ENCODE measurements at regions of chr12 and their contacts with region 1.

Region 1: DNA sequence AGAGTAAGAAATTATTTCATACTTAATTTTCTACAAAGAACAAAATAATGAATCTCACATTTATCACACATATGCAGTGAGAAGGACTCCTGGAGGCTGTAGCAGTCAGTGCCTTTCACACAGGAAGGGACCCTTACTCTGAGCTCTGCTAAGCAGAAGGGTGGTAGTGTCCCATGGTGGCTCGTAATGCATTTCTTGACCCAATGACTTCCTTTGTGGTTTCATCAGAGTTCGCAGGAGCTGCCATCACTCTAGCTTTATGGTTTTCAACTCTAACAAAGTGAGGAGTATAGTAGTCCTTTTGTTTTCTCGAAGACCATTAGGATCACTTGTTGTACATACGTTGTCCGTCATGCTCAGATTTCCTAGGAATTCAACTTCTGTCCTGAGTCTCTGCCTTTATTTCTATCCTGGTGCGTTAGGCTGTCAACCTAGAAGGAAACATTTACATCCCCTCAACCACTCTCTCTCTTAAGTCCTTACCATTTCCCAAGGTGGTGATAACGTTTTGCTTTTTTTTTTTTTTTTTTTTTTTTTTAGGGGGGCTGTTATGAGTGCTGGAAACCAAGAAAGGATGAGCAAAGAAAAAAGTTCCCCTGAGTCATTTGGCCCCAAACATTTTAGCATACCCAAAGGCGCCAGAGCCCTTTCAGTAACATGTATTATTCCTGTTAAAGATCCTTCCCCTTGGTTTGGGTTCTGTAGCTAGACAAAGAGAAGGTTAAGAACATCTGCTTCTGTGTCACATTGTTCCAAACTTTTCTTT is 37.2 kb downstream of the GABARAPL1 start:
- DNase-seq: peak in 5 of 9 experiments; percentile 14 to 79 (median 38)
- ATAC-seq: peak; percentile 51
- H3K4me3 ChIP-seq: peak overlapping the region in 1 of 2 experiments; percentile 12
- H3K4me3 Mint-ChIP-seq: peak overlapping the region; percentile 1
- H3K27ac ChIP-seq: peak overlapping the region in 1 of 2 experiments; percentile 68
- H3K27ac Mint-ChIP-seq: peak overlapping the region; percentile 25
- H3K4me1 ChIP-seq: peaks cover 10% of the 10 kb centered on the region
- H3K4me1 Mint-ChIP-seq: peaks cover 26% of the 10 kb centered on the region
- H3K27me3 ChIP-seq: no peaks in the 10 kb centered on the region
- H3K27me3 Mint-ChIP-seq: no peaks in the 10 kb centered on the region
- CTCF ChIP-seq: no peak

Region 2: DNA sequence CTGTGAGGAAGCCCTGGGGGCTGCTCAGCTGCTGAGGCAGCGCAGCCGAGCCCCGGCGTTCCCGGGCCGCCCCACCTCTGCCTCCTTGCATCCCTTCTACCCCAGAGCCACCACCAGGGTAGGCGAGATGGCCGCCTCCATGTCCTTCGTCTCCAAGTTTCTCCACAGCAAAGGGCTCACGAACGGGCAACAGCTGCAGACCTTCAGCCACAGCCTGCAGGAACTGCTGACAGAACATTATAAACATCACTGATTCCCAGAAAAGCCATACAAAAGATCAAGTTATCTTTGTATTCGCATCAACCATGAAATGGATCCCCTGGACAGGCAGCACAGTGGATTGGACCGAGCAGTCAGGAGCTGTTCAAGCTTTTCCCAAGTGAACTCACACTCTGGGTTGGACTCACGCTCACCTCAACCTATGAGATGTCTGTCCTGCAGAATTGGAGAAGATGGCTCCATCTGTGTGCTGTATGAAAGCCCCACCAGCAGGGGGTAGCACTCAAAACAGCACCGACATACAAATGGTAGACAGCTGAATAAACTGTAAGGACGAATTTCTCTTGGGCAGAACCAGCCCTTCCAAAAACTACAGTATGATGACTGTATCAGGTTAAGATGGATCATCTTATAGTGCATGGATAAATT is 1114.8 kb before region 1 on chr12:
- CTCF ChIA-PET with region 1: no interaction called
- POLR2A ChIA-PET with region 1: no interaction called
- intact Hi-C with region 1: no loop called
- DNase-seq: peak in 1 of 9 experiments; percentile 15
- ATAC-seq: no peak
- H3K4me3 ChIP-seq: no peak overlapping the region
- H3K4me3 Mint-ChIP-seq: no peak overlapping the region
- H3K27ac ChIP-seq: no peak overlapping the region
- H3K27ac Mint-ChIP-seq: no peak overlapping the region
- H3K4me1 ChIP-seq: no peaks in the 10 kb centered on the region
- H3K4me1 Mint-ChIP-seq: peaks cover 4% of the 10 kb centered on the region
- H3K27me3 ChIP-seq: no peaks in the 10 kb centered on the region
- H3K27me3 Mint-ChIP-seq: no peaks in the 10 kb centered on the region
- CTCF ChIP-seq: no peak

Region 3: DNA sequence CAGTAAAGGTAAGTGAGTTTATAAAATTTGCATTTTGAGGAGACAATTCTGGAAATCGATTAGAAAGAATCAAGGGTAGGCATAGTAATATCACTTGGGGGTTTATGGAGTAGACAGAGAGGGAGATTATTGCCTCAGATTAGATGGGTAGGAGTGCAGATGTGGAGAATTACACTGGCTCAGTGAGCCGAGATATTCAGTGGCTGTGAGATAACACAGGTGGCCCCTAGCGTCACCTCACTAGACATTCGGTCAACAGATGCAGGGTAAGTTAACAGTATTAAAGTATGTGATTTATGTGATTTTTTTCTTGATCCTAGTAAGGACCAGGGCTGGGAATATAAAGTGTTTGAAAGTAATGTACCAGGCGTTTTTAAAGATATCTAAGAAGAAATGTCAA is 18.2 kb after region 1 on chr12:
- CTCF ChIA-PET with region 1: no interaction called
- POLR2A ChIA-PET with region 1: no interaction called
- intact Hi-C with region 1: no loop called
- DNase-seq: no peak
- ATAC-seq: no peak
- H3K4me3 ChIP-seq: no peak overlapping the region
- H3K4me3 Mint-ChIP-seq: no peak overlapping the region
- H3K27ac ChIP-seq: no peak overlapping the region
- H3K27ac Mint-ChIP-seq: no peak overlapping the region
- H3K4me1 ChIP-seq: no peaks in the 10 kb centered on the region
- H3K4me1 Mint-ChIP-seq: no peaks in the 10 kb centered on the region
- H3K27me3 ChIP-seq: no peaks in the 10 kb centered on the region
- H3K27me3 Mint-ChIP-seq: no peaks in the 10 kb centered on the region
- CTCF ChIP-seq: no peak

Region 4: GRCh38 chr12:10283027-10283426 is 33.2 kb after region 1 on chr12:
- CTCF ChIA-PET with region 1: no interaction called
- POLR2A ChIA-PET with region 1: no interaction called
- intact Hi-C with region 1: loop called in 1 of 2 experiments (anchors 5 kb)
- DNase-seq: no peak
- ATAC-seq: no peak
- H3K4me3 ChIP-seq: no peak overlapping the region
- H3K4me3 Mint-ChIP-seq: no peak overlapping the region
- H3K27ac ChIP-seq: peak overlapping the region in 1 of 2 experiments; percentile 58
- H3K27ac Mint-ChIP-seq: no peak overlapping the region
- H3K4me1 ChIP-seq: no peaks in the 10 kb centered on the region
- H3K4me1 Mint-ChIP-seq: peaks cover 26% of the 10 kb centered on the region
- H3K27me3 ChIP-seq: no peaks in the 10 kb centered on the region
- H3K27me3 Mint-ChIP-seq: no peaks in the 10 kb centered on the region
- CTCF ChIP-seq: no peak